ENCODE measurements at regions of chr5 and their contacts with region 1.

Region 1: DNA sequence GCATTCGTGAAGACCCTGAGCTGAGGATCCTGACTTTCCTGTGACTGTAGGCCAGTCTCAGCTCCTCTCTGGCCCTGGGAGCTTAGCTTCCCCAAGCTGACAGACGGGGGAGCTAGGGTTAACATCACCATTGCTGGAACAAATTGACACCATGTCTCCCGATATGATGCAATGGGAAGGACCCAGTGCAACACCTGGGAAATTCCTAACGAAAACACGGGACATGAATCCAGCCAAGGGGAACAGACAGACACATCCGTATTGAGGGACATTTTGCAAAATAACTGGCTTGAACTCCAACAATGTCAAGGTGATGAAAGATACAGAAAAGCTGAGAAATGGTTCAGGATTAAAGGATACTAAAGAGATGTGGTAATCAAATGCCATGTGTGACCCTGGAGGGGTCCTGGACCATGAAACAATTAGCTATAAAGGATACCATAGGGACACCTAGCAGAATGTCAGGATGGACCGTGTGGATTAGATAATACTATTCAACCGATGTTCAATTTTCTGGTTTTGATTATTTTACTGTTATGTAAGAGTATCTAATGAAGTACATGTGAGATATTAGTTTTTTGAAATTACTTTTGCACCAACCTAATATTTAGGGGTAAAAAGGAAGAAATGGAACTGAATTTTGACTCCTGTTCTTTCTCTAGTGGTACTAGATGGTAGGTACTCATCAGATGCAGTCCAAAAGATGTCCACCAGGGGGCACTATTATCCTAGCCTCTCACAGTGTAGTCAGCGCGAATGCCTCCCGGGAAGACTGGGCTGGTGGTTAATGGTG is 52.7 kb downstream of the NDST1 start:
- DNase-seq: no peak
- H3K4me3 ChIP-seq: no peak overlapping the region
- CTCF ChIP-seq: peak; percentile 76

Region 2: GRCh38 chr5:148875205-148875875 is 1685.3 kb before region 1 on chr5:
- CTCF ChIA-PET with region 1: no interaction called
- POLR2A ChIA-PET with region 1: no interaction called
- DNase-seq: no peak
- H3K4me3 ChIP-seq: no peak overlapping the region
- CTCF ChIP-seq: no peak

Region 3: GRCh38 chr5:150302301-150303069 is 258.1 kb before region 1 on chr5 and contains the start of gene ARSI:
- CTCF ChIA-PET with region 1: no interaction called
- POLR2A ChIA-PET with region 1: no interaction called
- DNase-seq: no peak
- H3K4me3 ChIP-seq: peak within 1 kb of the TSS; percentile 58
- CTCF ChIP-seq: peak; percentile 65

Region 4: DNA sequence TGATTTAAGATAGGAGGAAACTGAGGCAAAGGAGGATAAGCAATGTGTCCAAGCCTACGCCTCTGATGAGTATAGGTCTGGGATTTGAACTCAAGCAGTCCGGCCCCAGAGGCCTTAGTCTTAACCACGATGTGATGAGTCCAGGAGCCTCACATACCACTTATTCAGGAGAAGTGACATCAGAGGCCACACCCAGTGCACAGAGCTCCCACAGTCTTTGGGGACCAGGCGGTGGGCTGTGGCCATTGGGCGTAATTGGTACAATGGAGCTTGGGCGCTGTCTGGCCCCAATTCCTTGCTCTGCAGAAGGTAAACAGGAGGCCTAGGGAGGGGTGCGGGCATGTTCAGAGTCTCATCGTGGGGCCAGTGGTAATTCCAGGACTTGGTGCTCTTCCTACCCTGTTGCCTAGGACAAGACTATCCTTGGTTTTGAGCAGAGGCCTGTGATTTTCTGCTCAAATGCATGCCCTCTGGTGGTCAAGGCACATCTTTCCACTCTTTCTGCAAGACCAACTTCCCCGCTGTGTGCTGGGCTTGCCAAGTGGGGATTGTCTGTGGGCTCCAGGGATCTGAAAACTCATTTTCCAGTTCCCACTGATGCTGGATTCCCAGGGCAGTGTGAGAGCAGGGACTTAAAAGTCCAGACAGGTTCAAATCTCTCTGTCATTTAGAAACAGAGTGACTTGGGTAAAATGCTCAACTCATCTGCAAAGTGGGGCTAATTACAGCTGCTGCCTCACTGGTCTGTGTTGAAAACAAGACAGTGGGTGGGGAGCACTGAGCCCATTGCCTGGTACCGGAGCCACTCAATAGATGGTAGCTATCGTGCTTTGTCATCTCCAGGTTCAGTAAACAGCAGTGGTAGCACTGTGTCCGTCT is 36.9 kb before region 1 on chr5:
- CTCF ChIA-PET with region 1: interaction called, 14 read pairs
- POLR2A ChIA-PET with region 1: no interaction called
- DNase-seq: no peak
- H3K4me3 ChIP-seq: no peak overlapping the region
- CTCF ChIP-seq: peak; percentile 69

Region 5: GRCh38 chr5:150619359-150620230 is 59.0 kb after region 1 on chr5:
- CTCF ChIA-PET with region 1: interaction called, 15 read pairs
- POLR2A ChIA-PET with region 1: no interaction called
- DNase-seq: no peak
- H3K4me3 ChIP-seq: no peak overlapping the region
- CTCF ChIP-seq: no peak

Region 6: DNA sequence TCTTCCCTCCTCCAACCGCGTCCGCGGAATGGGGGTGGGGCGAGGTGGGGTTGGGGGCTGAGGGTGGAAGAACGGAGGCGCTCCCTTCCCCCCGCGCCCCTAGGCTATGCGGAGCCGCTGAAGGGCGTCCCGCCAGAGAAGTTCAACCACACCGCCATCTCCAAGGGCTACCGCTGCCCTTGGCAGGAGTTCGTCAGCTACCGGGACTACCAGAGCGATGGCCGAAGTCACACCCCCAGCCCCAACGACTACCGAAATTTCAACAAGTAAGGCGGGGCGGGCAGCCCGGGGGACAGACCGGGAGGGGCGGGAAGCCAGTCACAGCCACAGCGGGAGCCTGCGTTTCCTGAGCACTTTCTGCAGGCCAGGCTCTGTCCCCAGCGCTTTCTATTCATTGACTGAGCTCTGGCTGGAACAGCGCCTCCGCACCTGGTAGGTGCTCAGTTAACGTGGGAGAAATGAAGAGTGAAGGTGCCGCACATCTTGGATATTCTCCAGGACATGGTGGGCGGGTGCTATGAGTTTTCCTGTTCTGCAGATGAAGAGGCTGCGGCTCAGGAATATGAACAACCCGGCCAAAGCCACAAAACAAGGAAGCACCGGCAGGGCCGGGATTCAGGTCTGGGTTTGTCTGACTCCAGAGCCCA is 111.8 kb after region 1 on chr5:
- CTCF ChIA-PET with region 1: interaction called, 55 read pairs
- POLR2A ChIA-PET with region 1: no interaction called
- DNase-seq: no peak
- H3K4me3 ChIP-seq: peak overlapping the region; percentile 59
- CTCF ChIP-seq: no peak

Region 7: DNA sequence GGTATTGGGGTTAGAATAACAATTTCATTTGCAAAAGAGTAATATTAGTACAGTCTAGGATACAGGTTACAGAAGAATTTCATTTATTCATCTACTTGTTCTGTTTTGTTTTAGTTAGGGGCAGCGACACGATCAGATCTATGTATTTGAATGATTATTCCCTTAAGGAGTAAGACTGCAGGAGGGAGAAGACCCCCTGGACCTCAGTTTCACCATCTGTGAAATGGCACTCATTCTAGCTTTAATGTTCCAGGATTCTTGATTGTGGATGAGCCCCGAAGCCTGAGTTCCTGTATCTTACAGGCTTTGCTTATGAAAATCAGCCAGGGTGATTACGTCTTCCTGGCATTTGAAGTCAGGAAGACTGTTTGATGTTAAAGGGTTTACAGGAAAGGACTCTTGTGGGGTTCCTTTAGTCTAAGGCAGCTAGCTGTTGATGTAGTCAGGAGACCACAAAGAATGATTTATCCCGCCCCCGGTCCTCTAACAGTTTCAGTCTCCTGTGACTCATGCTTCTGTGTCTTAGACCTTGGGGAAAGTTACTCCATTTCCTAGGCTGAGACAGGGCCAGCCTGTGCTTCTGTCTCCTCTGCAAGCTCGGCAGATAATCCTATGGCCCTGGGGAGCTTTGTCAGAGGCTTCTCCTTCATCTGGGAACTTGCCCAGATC is 229.5 kb after region 1 on chr5:
- CTCF ChIA-PET with region 1: interaction called, 11 read pairs
- POLR2A ChIA-PET with region 1: no interaction called
- DNase-seq: peak; percentile 99
- H3K4me3 ChIP-seq: peak overlapping the region; percentile 25; the same call in 1 of the 2 replicates
- CTCF ChIP-seq: no peak

Measured in AG04449 (cell line).